A549 (cell line): ENCODE measurements at regions of chr1 and their contacts with region 1.

Region 1: GRCh38 chr1:244272471-244273261 is 179.0 kb downstream of the ADSS2 start:
- DNase-seq: peak; percentile 68 to 92
- ATAC-seq: peak; percentile 28 to 64; a peak in 4 of 6 replicates
- H3K4me3 ChIP-seq: no peak overlapping the region
- H3K27ac ChIP-seq: peak overlapping the region; percentile 86 to 89
- H3K4me1 ChIP-seq: peaks cover 41% of the 10 kb centered on the region
- CTCF ChIP-seq: peak; percentile 100
- EP300 ChIP-seq: no peak
- POLR2A ChIP-seq: no peak
- RAD21 ChIP-seq: peak; percentile 100

Region 2: GRCh38 chr1:243343970-243344937 is 928.4 kb before region 1 on chr1:
- CTCF ChIA-PET with region 1: interaction called, 29 read pairs
- POLR2A ChIA-PET with region 1: no interaction called
- DNase-seq: peak; percentile 25 to 51
- ATAC-seq: peak; percentile 66 to 75; a peak in 5 of 6 replicates
- H3K4me3 ChIP-seq: no peak overlapping the region
- H3K27ac ChIP-seq: no peak overlapping the region
- H3K4me1 ChIP-seq: peaks cover 11% of the 10 kb centered on the region; the same call in 2 of the 3 replicates
- CTCF ChIP-seq: peak; percentile 93
- EP300 ChIP-seq: no peak
- POLR2A ChIP-seq: no peak
- RAD21 ChIP-seq: peak; percentile 88 to 89

Region 3: DNA sequence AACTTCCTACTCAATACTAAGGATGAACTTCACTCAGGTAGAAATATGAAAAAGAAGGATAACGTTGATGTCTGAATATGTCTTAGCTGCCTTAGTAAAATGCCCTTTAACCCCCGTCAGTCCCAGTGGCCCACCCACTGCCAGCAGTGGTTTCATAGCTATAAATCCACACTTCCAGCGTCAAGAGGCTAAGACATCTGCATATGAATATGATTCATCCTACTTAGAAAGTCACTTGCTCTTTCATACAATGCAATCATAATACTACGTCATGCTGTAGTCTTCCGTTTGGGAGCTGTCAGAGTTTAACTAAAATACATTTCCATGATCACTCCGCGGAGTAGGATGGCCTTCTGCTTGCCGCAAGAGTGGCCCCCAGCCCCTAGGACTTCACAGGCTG is 769.5 kb before region 1 on chr1:
- CTCF ChIA-PET with region 1: interaction called, 13 read pairs
- POLR2A ChIA-PET with region 1: no interaction called
- DNase-seq: no peak
- ATAC-seq: no peak
- H3K4me3 ChIP-seq: no peak overlapping the region
- H3K27ac ChIP-seq: no peak overlapping the region
- H3K4me1 ChIP-seq: no peaks in the 10 kb centered on the region
- CTCF ChIP-seq: no peak
- EP300 ChIP-seq: no peak
- POLR2A ChIP-seq: no peak
- RAD21 ChIP-seq: no peak

Region 4: DNA sequence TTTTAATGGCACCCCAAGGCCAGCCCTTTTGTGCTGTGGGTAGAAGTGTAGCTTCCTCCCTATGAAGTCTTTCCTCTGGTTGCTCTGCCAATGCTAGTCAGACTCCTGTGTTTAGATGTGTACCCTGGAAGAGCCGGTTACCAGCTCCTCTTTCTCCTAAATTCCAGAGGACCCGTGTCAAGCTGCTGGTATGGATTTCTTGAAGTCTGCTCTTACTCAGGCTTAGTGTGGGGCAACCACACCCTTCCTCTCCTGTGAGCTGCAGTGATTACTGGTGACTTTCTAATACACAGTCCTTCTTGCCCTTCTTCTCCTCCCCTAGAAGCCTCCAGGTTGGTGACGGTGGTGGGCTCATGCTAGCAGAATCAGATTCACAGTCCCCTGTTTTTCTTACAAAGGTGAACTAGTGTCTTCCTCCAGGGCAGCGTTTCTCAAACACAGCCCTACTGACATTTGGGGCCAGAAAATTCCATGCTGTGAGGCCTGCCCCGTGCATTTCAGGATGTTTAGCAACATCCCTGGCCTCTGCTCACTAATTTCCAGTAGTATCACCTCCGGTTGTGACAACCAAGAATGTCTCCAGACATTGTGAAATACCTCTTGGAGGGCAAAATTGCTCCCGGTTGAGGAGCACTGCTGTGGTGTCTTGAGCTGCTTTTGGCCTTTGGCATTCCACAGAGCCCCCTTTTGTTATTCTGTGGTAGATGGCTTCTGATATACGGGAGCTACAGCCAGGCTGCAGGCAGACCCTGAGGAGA is 348.3 kb before region 1 on chr1:
- CTCF ChIA-PET with region 1: interaction called, 10 read pairs
- POLR2A ChIA-PET with region 1: no interaction called
- DNase-seq: peak in 1 of 2 experiments; percentile 36
- ATAC-seq: peak; percentile 45 to 59; a peak in 4 of 6 replicates
- H3K4me3 ChIP-seq: no peak overlapping the region
- H3K27ac ChIP-seq: peak overlapping the region; percentile 39 to 74
- H3K4me1 ChIP-seq: peaks cover 45% of the 10 kb centered on the region
- CTCF ChIP-seq: no peak
- EP300 ChIP-seq: no peak
- POLR2A ChIP-seq: no peak
- RAD21 ChIP-seq: no peak

Region 5: DNA sequence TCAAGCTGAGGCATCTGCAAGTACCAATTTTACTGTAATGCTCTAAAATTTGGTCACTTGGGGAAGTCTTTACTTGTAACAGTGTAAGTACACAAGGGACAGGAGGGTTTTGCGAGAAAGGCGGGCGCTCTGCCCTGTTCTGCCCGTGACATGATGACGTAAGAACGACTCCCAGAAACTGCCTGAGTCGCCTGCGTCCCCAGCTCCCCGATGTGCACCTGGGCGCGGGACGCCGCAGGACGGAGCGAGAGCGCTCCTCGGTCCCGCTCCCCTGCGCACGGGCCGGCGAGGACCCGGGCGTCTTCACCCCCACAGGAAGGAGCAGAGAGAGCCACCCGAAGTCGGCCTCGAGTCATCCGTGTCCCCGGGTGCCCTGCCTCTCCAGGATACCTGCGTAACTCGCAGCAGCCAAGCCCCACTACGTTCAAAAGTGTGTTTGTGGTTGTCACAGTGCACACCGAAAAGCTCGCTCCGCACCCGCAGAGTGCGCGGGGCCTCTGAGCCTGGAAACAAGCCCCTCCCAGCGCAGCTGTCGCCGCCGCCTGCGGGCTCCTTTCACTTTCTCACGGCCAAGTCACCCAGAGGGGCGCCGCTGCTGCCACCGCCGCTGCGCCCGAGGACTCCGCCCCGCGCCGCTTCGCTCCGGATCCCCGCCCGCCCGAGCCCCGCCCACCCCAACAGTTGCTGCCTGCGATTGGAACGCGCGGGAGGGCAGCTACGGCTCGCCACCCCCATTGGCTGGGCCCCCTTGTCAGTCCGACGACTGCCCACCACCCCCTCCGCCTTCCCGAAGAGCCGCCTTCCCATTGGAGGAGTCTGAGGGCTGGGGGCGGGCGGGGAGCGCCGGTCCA is 224.8 kb before region 1 on chr1:
- CTCF ChIA-PET with region 1: interaction called, 10 read pairs
- POLR2A ChIA-PET with region 1: interaction called, 3 read pairs
- DNase-seq: peak; percentile 96 to 99
- ATAC-seq: peak; percentile 93 to 98
- H3K4me3 ChIP-seq: peak overlapping the region; percentile 79
- H3K27ac ChIP-seq: peak overlapping the region; percentile 86 to 93
- H3K4me1 ChIP-seq: peaks cover 30% of the 10 kb centered on the region
- CTCF ChIP-seq: no peak
- EP300 ChIP-seq: no peak
- POLR2A ChIP-seq: peak; percentile 69
- RAD21 ChIP-seq: no peak; a peak in 3 of 5 replicates

Region 6: DNA sequence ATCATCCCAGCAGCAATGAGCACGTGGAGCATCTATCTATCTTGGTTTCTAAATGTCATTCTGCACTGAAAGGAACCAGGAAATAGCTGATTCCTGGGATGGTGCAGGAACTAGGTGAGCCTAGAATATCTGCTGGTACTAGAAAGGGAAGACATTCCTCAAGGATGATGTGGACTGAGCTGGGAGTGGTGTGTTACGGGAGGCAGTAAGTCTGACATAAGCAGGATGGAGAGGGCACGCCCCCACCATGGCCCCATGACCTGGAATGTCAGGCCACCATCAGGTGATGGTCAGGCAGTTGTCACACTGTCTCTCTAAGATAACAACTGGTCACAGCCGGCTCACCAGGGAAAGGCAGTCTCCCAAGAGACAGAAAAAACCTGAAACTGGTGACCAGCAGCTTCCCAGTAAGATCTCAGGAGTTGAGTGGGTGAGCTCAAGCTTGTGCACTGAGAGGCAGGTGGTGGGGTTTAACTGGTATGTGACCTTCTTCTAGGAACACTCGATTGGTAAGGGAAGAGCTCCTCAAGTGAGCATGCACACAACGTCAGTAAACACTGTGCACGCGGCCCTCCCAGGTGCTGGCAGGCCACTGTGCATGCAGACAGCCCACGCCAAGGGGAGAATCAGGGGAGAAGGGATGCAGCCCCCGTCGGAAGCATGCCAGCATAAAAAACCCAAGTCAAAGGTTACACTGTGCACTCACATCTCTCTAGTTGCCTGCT is 30.4 kb after region 1 on chr1:
- CTCF ChIA-PET with region 1: interaction called, 49 read pairs
- POLR2A ChIA-PET with region 1: no interaction called
- DNase-seq: peak; percentile 83 to 89
- ATAC-seq: peak; percentile 89 to 94
- H3K4me3 ChIP-seq: no peak overlapping the region
- H3K27ac ChIP-seq: peak overlapping the region; percentile 59 to 79
- H3K4me1 ChIP-seq: peaks cover 30% of the 10 kb centered on the region
- CTCF ChIP-seq: no peak
- EP300 ChIP-seq: no peak
- POLR2A ChIP-seq: no peak
- RAD21 ChIP-seq: 0 out of 5 replicates have a peak, but pooled peaks of 1 of the 2 experiments have one; percentile 17